Activated CD8-positive, alpha-beta memory T cell treated with anti-CD3 and anti-CD28 coated beads, Interleukin-2, amount 10 ng/mL, durations not matched to agents 7 days and 5 days (primary cell): ENCODE measurements at regions of chr22 and their contacts with region 1.

Region 1: DNA sequence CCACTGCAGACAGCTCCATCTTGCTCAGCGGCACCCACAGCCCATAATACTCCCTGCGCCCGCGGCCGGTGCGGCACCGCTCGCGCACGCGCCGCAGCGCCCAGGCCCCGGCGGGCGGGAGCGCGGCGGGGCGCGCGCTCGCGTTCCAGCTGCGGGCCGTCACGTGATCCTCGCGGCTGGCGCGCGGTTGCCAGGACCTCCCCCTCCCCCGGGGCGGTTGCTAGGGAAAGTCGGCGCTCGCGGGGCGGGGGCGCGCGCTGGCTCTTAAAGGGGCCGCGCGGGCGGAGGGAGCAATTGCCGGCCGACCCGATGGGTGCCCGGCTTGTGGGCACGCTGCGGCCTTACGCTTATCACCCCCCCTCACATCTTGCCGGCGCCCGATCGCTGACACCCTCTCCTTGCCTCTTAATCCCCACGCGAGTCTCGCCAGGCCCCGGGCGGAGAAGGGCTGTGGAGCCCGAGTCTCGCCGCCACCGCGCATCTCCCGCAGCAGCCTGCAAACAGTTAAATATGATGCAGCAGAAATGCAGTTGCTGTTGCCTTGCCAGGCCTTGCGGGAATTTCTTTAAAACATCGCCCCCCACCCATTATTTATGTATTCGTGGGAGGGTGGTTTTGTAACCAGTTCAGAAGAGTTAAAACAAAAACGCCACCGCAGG is at the start of gene CBX6:
- DNase-seq: peak; percentile 95
- ATAC-seq: peak; percentile 77
- H3K4me3 Mint-ChIP-seq: peak within 1 kb of the TSS; percentile 87
- H3K27ac Mint-ChIP-seq: peak within 1 kb of the TSS; percentile 88
- H3K4me1 Mint-ChIP-seq: peaks cover 47% of the 10 kb centered on the region
- H3K27me3 Mint-ChIP-seq: peaks cover 10% of the 10 kb centered on the region
- total RNA-seq, gene CBX6: 73.1 to 124 TPM

Region 2: GRCh38 chr22:38674888-38675287 is 197.4 kb before region 1 on chr22:
- CTCF ChIA-PET with region 1: no interaction called
- DNase-seq: no peak
- ATAC-seq: no peak
- H3K4me3 Mint-ChIP-seq: no peak overlapping the region
- H3K27ac Mint-ChIP-seq: no peak overlapping the region
- H3K4me1 Mint-ChIP-seq: no peaks in the 10 kb centered on the region
- H3K27me3 Mint-ChIP-seq: no peaks in the 10 kb centered on the region

Region 3: DNA sequence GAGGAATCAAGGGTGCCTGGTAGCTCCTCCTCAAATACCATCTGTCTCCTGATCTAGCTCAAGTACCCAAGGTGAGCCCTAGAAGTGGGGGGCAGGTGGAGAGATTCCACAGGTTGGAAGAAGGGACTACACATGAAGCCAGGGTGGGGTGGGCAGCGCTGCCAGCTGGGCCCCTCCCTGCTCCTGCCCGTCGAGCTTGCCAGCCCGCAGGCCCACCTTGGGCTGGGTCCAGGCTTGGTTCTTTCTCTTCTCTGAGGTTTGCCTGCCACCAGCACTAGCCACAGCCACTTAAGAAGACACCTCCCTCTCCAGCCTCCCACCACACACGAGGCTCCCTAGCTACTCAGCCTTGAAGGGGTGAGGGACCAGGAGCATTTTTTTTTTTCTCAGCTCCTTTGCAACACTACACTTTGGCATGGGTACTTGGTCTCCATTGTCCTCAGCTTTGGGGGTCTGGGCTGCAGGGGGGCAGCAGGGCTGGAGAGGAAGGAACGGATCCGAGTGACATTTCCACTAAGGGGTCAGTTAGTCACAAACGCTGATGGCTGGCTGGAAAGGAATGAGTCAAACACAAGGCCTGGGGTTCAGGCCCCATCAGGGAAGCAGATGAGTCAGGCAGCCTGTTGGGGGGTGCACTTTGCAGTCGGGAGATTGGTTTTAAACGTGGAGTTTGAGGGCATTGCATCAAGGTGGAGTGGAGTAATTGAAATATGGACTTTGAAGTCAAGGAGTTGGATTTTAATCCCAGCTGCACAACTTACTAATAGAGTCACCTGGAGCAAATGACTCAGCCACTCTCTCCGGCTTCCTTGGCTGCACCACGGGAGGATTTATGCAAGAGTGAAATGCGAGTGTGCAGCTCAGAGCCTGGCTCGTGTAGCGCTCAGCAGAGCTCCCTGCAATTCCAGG is 21.1 kb before region 1 on chr22:
- CTCF ChIA-PET with region 1: interaction called, 24 read pairs
- DNase-seq: no peak
- ATAC-seq: no peak
- H3K4me3 Mint-ChIP-seq: no peak overlapping the region
- H3K27ac Mint-ChIP-seq: no peak overlapping the region
- H3K4me1 Mint-ChIP-seq: no peaks in the 10 kb centered on the region
- H3K27me3 Mint-ChIP-seq: peaks cover 37% of the 10 kb centered on the region

Region 4: DNA sequence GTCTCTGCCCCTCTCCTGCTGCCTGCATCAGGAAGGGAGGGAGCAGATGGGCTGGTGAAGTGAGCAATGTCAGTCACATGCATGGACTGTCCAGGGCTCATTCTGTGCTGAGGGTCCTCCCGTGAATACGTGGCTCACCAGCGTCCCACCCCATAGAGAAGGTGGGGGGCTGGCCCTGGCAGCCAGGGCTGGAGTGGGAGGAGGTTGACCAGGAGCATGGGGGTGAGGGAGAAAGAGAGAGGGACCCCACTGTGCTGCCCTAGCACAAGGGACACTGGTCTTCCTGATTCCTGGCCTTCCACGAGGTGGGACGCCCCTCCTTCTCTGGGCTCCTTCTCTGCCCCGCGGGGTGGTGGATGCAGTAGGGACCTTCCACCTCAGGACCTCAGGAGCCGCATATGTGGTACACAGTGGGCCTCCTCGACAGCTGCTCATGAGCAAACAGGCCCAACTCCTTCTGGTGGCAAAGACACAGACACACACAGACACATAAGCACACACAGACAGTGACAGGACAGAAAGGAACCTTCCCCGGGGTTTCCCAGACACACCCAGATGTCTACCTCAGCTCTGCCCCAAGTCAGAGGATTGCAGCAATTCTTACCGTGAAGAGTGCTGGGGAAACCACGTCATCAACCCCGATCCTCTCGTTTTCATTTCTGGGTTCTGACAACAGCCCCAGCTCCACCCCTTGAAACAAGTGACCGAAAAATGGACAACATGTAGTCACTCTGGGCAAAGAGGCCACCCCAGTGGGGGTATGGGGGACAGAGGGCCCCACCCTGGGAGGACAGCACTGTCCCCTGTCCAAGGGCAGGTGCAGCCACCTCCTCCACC is 81.5 kb after region 1 on chr22:
- CTCF ChIA-PET with region 1: interaction called, 27 read pairs
- DNase-seq: peak; percentile 93
- ATAC-seq: peak; percentile 94
- H3K4me3 Mint-ChIP-seq: peak overlapping the region; percentile 67
- H3K27ac Mint-ChIP-seq: peak overlapping the region; percentile 90
- H3K4me1 Mint-ChIP-seq: peaks cover 56% of the 10 kb centered on the region
- H3K27me3 Mint-ChIP-seq: peaks cover 6% of the 10 kb centered on the region

Region 5: DNA sequence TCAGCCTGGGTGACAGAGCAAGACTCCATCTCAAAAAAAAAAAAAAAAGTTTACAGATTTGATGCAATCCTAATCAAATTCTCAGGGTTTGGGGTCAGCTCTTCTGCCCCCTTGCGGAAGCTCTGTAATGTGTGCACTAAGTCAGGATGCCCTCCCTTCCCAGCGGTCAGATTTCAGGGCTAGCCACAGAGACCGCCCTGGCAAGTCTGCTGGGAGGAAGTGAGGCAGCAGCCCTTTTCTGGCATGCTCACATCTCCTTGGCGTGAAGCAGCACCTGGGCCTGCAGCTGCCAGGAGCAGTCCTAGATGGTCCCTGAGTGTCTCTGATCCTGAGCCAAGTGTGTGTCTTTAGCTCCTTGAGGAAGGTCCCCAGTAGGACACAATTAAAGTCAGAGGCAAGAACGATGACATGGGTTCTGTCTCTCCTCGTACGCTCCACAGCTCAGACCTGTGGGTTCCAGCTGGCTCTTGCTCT is 130.9 kb after region 1 on chr22:
- CTCF ChIA-PET with region 1: interaction called, 171 read pairs
- DNase-seq: peak; percentile 94
- ATAC-seq: peak; percentile 92
- H3K4me3 Mint-ChIP-seq: no peak overlapping the region
- H3K27ac Mint-ChIP-seq: peak overlapping the region; percentile 73
- H3K4me1 Mint-ChIP-seq: peaks cover 13% of the 10 kb centered on the region
- H3K27me3 Mint-ChIP-seq: peaks cover 11% of the 10 kb centered on the region

Region 6: DNA sequence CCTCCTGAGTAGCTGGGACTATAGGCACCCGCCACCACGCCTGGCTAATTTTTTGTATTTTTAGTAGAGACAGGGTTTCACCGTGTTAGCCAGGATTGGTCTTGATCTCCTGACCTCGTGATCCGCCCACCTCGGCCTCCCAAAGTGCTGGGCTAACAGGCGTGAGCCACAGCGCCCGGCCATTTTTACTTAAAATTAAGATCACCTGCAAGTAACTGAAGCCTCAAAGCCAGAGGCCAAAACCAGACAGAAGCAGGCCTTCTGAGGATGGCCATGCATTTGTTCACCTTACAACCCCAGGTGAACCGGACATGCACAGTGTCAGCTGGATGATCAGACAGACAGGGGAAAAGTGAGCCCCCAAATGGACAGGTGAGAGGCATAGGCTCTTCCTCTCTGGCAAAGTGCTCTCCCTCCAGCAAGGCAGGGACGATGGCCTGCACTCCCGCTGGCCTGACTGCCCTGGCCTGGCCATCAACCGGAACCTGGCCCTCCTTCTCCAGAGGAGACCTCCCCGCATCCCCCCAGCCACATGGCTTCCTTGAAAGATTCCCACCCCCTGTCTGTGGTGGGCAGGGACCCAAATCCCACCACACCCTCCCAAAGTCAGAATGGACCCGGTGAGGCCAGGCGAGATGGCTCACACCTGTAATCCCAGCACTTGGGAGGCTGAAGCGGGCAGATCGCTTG is 250.6 kb after region 1 on chr22:
- CTCF ChIA-PET with region 1: interaction called, 19 read pairs
- DNase-seq: no peak
- ATAC-seq: no peak
- H3K4me3 Mint-ChIP-seq: no peak overlapping the region
- H3K27ac Mint-ChIP-seq: no peak overlapping the region
- H3K4me1 Mint-ChIP-seq: peaks cover 23% of the 10 kb centered on the region
- H3K27me3 Mint-ChIP-seq: no peaks in the 10 kb centered on the region